ENCODE measurements at regions of chr6 and their contacts with region 1.

Region 1: GRCh38 chr6:16770701-16771569 is 9.7 kb upstream of the ATXN1 start:
- DNase-seq: peak; percentile 21 to 96 (median 70)

Region 2: GRCh38 chr6:16793828-16794412 is 23.0 kb after region 1 on chr6:
- intact Hi-C with region 1: no loop called
- DNase-seq: no peak

Region 3: DNA sequence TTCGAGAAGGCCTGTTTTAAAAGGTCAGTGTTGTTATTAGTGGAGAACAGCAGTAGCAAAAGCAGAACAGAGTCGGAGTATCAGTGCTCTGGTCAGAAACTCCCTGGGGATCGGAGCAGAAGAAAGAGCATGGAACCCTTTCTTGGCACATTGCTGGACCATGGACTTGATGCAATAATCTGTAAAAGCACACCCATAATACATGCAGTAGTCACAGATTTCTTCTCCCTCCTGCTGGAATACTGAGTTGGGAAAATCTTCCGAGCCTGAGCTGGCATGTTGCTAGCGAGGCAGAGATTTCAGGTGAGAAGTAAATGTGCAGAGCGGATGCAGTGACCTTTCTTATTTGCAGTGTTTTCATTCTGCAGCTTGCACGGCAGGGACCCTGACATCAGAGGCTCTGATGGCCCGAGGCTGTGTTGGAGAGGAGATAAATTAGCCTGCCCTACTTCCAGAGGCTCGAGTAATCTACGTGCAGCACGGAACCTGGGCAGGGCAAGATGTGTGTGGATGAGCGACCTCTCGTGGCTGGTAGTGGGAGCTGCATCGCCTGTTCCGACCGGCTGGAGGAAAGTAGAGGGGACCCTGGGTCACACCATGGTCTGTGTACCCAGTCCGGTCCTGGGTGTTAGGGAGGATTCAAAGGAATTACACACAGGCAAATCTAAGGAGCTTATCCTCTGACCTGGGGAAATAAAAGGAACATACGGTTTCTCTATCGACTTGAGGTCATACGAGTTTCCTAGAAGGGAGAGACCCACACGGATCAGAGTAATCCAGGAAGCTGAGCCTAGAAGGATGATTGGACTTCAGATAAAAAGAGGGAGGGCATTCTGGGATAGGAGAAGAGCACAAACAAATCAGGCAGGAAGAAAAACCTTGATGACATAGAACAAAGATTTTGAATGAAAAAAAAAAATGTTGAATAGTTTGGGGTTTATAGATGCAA is 193.9 kb after region 1 on chr6:
- intact Hi-C with region 1: loop called (anchors 5 kb)
- DNase-seq: peak; percentile 61 to 97 (median 80)